ENCODE measurements at regions of chr9 and their contacts with region 1.

Region 1: DNA sequence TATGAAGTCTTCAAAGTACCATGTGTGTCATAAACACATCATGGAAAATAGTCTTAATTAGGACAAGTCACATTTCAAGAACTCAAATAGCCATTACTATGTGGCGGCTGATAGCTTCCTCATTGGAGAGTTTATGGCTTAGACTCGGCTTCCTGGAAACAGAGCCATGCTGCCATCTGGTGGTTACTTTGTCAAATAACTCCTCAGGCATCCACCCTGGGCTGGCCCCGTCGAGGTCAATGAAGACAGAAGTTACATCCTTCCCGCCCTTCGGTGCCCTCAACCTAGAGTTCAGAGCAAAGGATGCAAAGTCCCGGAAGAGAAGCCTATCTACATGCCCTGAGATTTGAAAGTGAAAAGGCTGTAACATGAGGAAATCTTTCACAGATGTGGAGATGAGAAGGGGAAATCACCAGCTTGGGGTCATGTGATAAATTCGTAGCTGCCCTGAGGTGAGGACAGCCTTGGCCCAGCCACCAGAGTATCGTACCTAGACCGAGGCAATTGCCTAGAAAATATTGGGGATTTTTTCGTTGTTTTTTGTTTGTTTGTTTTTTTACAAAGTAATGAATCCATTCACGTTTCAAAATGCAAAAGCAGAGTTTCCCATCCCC is 45.5 kb upstream of the ZNF169 start:
- DNase-seq: peak; percentile 76 to 80
- ATAC-seq: peak; percentile 97 to 100
- H3K4me3 ChIP-seq: no peak overlapping the region
- H3K27ac ChIP-seq: no peak overlapping the region
- H3K4me1 ChIP-seq: no peaks in the 10 kb centered on the region
- CTCF ChIP-seq: peak; percentile 90
- EP300 ChIP-seq: no peak
- POLR2A ChIP-seq: no peak
- RAD21 ChIP-seq: peak; percentile 97 to 98

Region 2: GRCh38 chr9:93682232-93682968 is 531.2 kb before region 1 on chr9:
- CTCF ChIA-PET with region 1: interaction called, 36 read pairs
- POLR2A ChIA-PET with region 1: no interaction called
- DNase-seq: peak; percentile 62 to 66
- ATAC-seq: peak; percentile 63 to 83
- H3K4me3 ChIP-seq: no peak overlapping the region
- H3K27ac ChIP-seq: no peak overlapping the region
- H3K4me1 ChIP-seq: no peaks in the 10 kb centered on the region
- CTCF ChIP-seq: peak; percentile 74
- EP300 ChIP-seq: no peak
- POLR2A ChIP-seq: no peak
- RAD21 ChIP-seq: peak; percentile 87 to 90

Region 3: GRCh38 chr9:94014065-94014654 is 199.5 kb before region 1 on chr9:
- CTCF ChIA-PET with region 1: interaction called, 193 read pairs
- POLR2A ChIA-PET with region 1: no interaction called
- DNase-seq: peak; percentile 31 to 39
- ATAC-seq: peak; percentile 64 to 82; a peak in 3 of 6 replicates
- H3K4me3 ChIP-seq: no peak overlapping the region
- H3K27ac ChIP-seq: no peak overlapping the region
- H3K4me1 ChIP-seq: no peaks in the 10 kb centered on the region
- CTCF ChIP-seq: peak; percentile 66
- EP300 ChIP-seq: no peak
- POLR2A ChIP-seq: no peak
- RAD21 ChIP-seq: peak; percentile 57 to 60

Region 4: DNA sequence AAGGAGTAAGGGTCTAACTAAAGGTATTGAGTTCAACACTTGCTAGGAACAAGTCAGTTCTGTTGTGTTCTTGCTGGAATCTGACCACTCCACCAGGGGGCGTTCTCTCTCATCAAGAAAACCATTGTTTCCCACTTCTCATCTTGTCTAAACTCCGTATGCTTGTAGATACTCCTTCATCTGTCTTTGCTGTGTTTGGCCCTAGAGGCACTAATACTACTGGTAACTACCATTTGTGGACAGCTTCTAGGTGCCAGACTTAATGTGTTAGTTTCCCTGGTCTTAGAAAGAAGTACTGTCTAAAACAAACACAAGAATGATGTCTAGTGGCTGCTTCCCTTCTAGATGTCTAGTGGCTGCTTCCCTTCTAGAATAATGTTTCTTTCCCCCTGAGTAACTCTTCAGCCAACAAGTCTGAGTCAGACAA is 148.1 kb before region 1 on chr9:
- CTCF ChIA-PET with region 1: interaction called, 170 read pairs
- POLR2A ChIA-PET with region 1: no interaction called
- DNase-seq: peak; percentile 34 to 84
- ATAC-seq: peak; percentile 68 to 87
- H3K4me3 ChIP-seq: no peak overlapping the region
- H3K27ac ChIP-seq: 0 out of 6 replicates have a peak overlapping the region, but pooled peaks of 1 of the 2 experiments have one; percentile 23
- H3K4me1 ChIP-seq: no peaks in the 10 kb centered on the region
- CTCF ChIP-seq: peak; percentile 85
- EP300 ChIP-seq: no peak
- POLR2A ChIP-seq: no peak
- RAD21 ChIP-seq: peak; percentile 81 to 82

Region 5: GRCh38 chr9:94083384-94083783 is 130.2 kb before region 1 on chr9:
- CTCF ChIA-PET with region 1: interaction called, 10 read pairs
- POLR2A ChIA-PET with region 1: no interaction called
- DNase-seq: no peak
- ATAC-seq: no peak
- H3K4me3 ChIP-seq: no peak overlapping the region
- H3K27ac ChIP-seq: no peak overlapping the region; a peak in 1 of 6 replicates
- H3K4me1 ChIP-seq: peaks cover 18% of the 10 kb centered on the region; the same call in 2 of the 3 replicates
- CTCF ChIP-seq: no peak
- EP300 ChIP-seq: no peak
- POLR2A ChIP-seq: no peak
- RAD21 ChIP-seq: no peak

Region 6: DNA sequence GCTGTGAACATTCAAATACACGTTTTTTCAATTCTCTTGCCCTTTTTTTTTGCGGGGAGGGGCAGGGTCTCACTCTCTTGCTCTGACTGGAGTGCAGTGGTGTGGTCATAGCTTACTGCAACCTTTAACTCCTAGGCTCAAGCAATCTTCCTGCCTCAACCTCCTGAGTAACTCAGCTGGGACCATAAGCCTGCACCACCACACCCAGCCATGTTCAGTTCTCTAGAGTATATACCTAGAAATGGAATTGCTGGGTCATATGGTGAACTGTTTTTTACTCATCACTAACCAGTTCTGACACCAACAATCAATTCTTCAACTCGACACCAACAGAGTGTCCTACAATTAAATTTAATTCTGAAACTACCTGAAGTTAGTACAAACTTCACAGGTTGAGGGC is 40.0 kb before region 1 on chr9:
- CTCF ChIA-PET with region 1: interaction called, 10 read pairs
- POLR2A ChIA-PET with region 1: no interaction called
- DNase-seq: no peak
- ATAC-seq: peak in 1 of 2 experiments; percentile 31; a peak in 1 of 6 replicates
- H3K4me3 ChIP-seq: no peak overlapping the region
- H3K27ac ChIP-seq: no peak overlapping the region
- H3K4me1 ChIP-seq: peaks cover 78% of the 10 kb centered on the region
- CTCF ChIP-seq: no peak
- EP300 ChIP-seq: no peak
- POLR2A ChIP-seq: no peak
- RAD21 ChIP-seq: no peak

Region 7: GRCh38 chr9:94199776-94200175 is 13.8 kb before region 1 on chr9:
- CTCF ChIA-PET with region 1: interaction called, 35 read pairs
- POLR2A ChIA-PET with region 1: no interaction called
- DNase-seq: no peak
- ATAC-seq: no peak
- H3K4me3 ChIP-seq: no peak overlapping the region
- H3K27ac ChIP-seq: no peak overlapping the region
- H3K4me1 ChIP-seq: no peaks in the 10 kb centered on the region
- CTCF ChIP-seq: no peak
- EP300 ChIP-seq: no peak
- POLR2A ChIP-seq: no peak
- RAD21 ChIP-seq: no peak

Region 8: DNA sequence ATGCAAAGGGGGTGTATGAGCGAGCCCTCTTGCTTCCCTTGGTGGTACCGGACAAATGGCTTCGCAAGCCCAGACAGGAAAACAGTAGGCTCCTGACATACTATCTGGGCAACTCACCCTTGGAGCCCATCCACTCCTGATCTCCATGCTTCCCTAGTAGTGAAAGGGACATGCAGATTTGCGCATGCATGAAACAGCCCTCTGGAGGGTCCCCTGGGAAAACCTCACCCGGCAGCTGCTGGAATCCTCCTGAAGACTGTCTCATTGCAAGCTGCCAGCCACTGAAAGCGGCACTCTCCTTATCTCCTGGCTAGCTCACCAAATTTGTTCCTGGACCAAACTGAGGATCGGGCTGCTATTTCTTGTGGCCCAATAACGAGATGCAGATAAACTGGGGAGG is 55.6 kb after region 1 on chr9:
- CTCF ChIA-PET with region 1: no interaction called
- POLR2A ChIA-PET with region 1: no interaction called
- DNase-seq: peak in 1 of 2 experiments; percentile 36
- ATAC-seq: peak; percentile 73 to 91
- H3K4me3 ChIP-seq: no peak overlapping the region
- H3K27ac ChIP-seq: peak overlapping the region; percentile 59 to 80; a peak in 5 of 6 replicates
- H3K4me1 ChIP-seq: peaks cover 39% of the 10 kb centered on the region
- CTCF ChIP-seq: no peak
- EP300 ChIP-seq: no peak
- POLR2A ChIP-seq: no peak
- RAD21 ChIP-seq: no peak